ENCODE measurements at regions of chr4 and their contacts with region 1.

Region 1: GRCh38 chr4:102610007-102610406 is 108.8 kb downstream of the NFKB1 start:
- DNase-seq: no peak
- ATAC-seq: no peak
- H3K4me3 Mint-ChIP-seq: peak overlapping the region; percentile 41
- H3K27ac Mint-ChIP-seq: peak overlapping the region; percentile 74
- H3K4me1 Mint-ChIP-seq: peaks cover 76% of the 10 kb centered on the region
- H3K27me3 Mint-ChIP-seq: no peaks in the 10 kb centered on the region

Region 2: GRCh38 chr4:102285831-102286230 is 324.2 kb before region 1 on chr4:
- POLR2A ChIA-PET with region 1: no interaction called
- DNase-seq: no peak
- ATAC-seq: no peak
- H3K4me3 Mint-ChIP-seq: no peak overlapping the region
- H3K27ac Mint-ChIP-seq: no peak overlapping the region
- H3K4me1 Mint-ChIP-seq: peaks cover 4% of the 10 kb centered on the region
- H3K27me3 Mint-ChIP-seq: no peaks in the 10 kb centered on the region

Region 3: DNA sequence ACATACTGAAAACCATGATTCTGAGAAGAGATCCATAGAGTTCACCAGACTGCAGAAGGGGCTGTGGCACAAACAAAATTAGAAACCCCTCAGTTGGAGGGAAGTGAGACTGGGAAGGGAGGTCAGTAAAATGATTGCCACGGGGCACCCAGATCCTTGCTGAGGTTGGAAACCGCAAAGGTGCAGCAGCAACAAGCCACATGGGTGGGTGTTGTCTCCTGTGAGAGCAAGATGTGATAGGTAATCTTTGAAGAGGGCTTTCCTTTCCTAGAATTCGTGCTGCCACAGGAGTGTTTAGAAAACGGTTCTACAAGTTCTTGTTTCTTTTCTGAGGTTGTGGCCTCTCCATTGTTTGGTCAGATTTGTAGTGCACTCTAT is 23.4 kb before region 1 on chr4:
- POLR2A ChIA-PET with region 1: interaction called, 10 read pairs
- DNase-seq: peak; percentile 69
- ATAC-seq: peak; percentile 82
- H3K4me3 Mint-ChIP-seq: peak overlapping the region; percentile 65
- H3K27ac Mint-ChIP-seq: peak overlapping the region; percentile 91
- H3K4me1 Mint-ChIP-seq: peaks cover 69% of the 10 kb centered on the region
- H3K27me3 Mint-ChIP-seq: no peaks in the 10 kb centered on the region

Region 4: GRCh38 chr4:102598086-102598761 is 11.8 kb before region 1 on chr4:
- POLR2A ChIA-PET with region 1: interaction called, 14 read pairs
- DNase-seq: no peak
- ATAC-seq: peak; percentile 90
- H3K4me3 Mint-ChIP-seq: peak overlapping the region; percentile 52
- H3K27ac Mint-ChIP-seq: peak overlapping the region; percentile 86
- H3K4me1 Mint-ChIP-seq: peaks cover 72% of the 10 kb centered on the region
- H3K27me3 Mint-ChIP-seq: no peaks in the 10 kb centered on the region

Region 5: GRCh38 chr4:102665527-102665926 is 55.5 kb after region 1 on chr4:
- POLR2A ChIA-PET with region 1: no interaction called
- DNase-seq: no peak
- ATAC-seq: no peak
- H3K4me3 Mint-ChIP-seq: no peak overlapping the region
- H3K27ac Mint-ChIP-seq: no peak overlapping the region
- H3K4me1 Mint-ChIP-seq: peaks cover 1% of the 10 kb centered on the region
- H3K27me3 Mint-ChIP-seq: no peaks in the 10 kb centered on the region

Region 6: GRCh38 chr4:103046416-103047290 is 436.6 kb after region 1 on chr4:
- POLR2A ChIA-PET with region 1: interaction called, 11 read pairs
- DNase-seq: no peak
- ATAC-seq: peak; percentile 94
- H3K4me3 Mint-ChIP-seq: no peak overlapping the region
- H3K27ac Mint-ChIP-seq: no peak overlapping the region
- H3K4me1 Mint-ChIP-seq: peaks cover 7% of the 10 kb centered on the region
- H3K27me3 Mint-ChIP-seq: no peaks in the 10 kb centered on the region

Measured in activated naive CD8-positive, alpha-beta T cell treated with anti-CD3 and anti-CD28 coated beads, Interleukin-2, amount 10 ng/mL, durations not matched to agents 7 days and 5 days (primary cell).